Dendritic cell treated with granulocyte-macrophage colony-stimulating factor and Interleukin-4, amounts not matched to agents 40 ng/mL and 50 ng/mL, for 4 days (primary cell): ENCODE measurements at regions of chr1 and their contacts with region 1.

Region 1: DNA sequence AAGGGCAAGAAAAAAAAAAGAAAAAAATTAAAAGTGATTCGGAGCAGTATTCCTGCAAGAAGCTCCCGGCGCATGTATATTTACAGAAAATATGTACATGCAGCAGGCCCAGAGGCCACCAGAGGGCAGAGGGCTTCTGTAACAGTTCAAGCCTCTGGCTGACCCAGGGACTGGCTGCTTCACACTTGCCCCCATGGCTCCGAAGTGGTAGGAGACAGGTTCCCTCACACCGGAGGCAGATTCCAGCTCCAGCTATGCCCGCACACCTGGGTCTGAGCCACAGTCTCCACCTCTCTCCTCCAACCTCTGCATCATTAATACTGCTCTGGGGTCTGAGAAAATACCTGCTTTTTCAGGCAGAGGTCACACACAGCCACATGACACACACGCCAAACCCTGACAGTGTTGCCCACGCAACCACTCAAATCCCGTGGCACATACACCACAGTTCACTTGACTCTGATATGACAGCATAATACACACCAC is 2.2 kb upstream of the ARHGAP30 start:
- H3K4me3 Mint-ChIP-seq: no peak overlapping the region
- H3K27ac Mint-ChIP-seq: no peak overlapping the region
- H3K4me1 Mint-ChIP-seq: peaks cover 54% of the 10 kb centered on the region
- H3K27me3 Mint-ChIP-seq: no peaks in the 10 kb centered on the region

Region 2: DNA sequence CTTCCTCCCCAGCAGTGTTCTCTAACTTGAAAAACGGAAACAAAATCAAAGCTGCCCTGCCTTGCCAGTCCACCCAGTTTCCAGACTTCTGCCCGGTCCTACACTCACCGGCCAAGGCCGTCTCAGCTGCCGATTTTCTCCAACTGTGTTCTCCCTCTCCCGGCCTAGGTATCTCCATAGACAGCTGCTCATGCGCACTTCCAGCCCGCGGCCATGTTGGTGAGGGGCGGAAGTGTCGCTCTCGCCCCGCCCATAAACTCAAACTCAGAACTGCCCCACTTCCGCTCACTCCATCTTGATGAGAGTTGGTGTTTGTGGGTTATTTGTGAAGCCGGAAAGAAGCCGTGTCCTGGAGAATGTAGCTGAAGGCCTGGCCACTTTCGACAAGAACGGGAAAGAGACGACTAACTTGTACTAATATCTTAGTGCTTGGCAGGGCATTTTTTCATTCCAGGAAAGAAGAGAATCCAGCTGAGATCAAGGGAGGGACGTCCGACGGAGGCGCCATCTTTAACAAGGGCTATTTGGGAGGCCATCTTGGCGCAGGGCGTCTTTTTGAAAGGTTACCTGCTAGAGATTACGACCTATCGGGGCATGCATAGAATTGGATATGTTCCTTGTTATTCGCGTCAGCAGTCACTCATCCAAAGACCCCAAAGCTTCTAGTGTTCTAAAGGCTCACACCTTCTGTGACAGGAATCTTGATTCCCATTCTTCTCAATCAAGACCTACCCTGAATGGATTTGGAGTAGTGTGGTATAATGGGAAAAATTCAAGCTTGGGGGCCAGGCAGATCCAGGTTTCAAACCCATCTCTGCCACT is 26.0 kb before region 1 on chr1 and contains the start of gene USF1:
- intact Hi-C with region 1: loop called (anchors 1 kb)
- H3K4me3 Mint-ChIP-seq: peak within 1 kb of the TSS; percentile 99
- H3K27ac Mint-ChIP-seq: peak within 1 kb of the TSS; percentile 100
- H3K4me1 Mint-ChIP-seq: peaks cover 61% of the 10 kb centered on the region
- H3K27me3 Mint-ChIP-seq: no peaks in the 10 kb centered on the region

Region 3: GRCh38 chr1:161082991-161083742 is 11.2 kb after region 1 on chr1:
- intact Hi-C with region 1: loop called (anchors 2 kb)
- H3K4me3 Mint-ChIP-seq: no peak overlapping the region
- H3K27ac Mint-ChIP-seq: peak overlapping the region; percentile 26
- H3K4me1 Mint-ChIP-seq: peaks cover 76% of the 10 kb centered on the region
- H3K27me3 Mint-ChIP-seq: peaks cover 3% of the 10 kb centered on the region

Region 4: GRCh38 chr1:161096530-161097313 is 24.8 kb after region 1 on chr1:
- intact Hi-C with region 1: loop called (anchors 1 kb)
- H3K4me3 Mint-ChIP-seq: no peak overlapping the region
- H3K27ac Mint-ChIP-seq: peak overlapping the region; percentile 68
- H3K4me1 Mint-ChIP-seq: peaks cover 54% of the 10 kb centered on the region
- H3K27me3 Mint-ChIP-seq: peaks cover 12% of the 10 kb centered on the region

Region 5: DNA sequence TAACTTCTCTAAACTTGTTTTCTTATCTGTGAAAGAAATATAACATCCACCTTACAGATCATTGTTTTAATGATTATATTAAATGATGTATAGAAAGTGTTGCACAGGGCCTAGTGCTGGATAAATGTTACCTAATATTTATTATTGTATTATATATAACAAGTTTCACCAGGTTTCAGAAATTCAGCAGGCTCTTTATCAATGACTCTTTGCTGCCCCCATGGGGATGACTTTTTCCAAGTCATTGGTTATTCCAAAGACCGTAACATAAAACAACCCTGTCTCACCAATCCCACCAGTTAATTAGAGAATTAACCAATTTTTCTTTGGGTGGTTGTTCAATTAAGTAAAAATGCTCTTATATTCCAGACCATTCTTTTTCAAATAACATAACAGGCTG is 67.8 kb after region 1 on chr1:
- intact Hi-C with region 1: loop called (anchors 1 kb)
- H3K4me3 Mint-ChIP-seq: no peak overlapping the region
- H3K27ac Mint-ChIP-seq: peak overlapping the region; percentile 87
- H3K4me1 Mint-ChIP-seq: peaks cover 45% of the 10 kb centered on the region
- H3K27me3 Mint-ChIP-seq: no peaks in the 10 kb centered on the region